Dorsolateral prefrontal cortex (tissue), 120 donors: ENCODE measurements at regions of chr9 and their contacts with region 1.

Region 1: GRCh38 chr9:115013998-115014397 is 83.6 kb upstream of the TNFSF8 start:
- DNase-seq: peak in 9 of 10 donors; percentile 45 to 77 (median 65)
- H3K4me3 ChIP-seq: no peak overlapping the region
- H3K27ac ChIP-seq: no peak overlapping the region
- H3K27me3 ChIP-seq: peaks cover 0 to 3% (median 0%) of the 10 kb centered on the region in 45 donors
- CTCF ChIP-seq: peak; percentile 66 to 95 (median 84)

Region 2: DNA sequence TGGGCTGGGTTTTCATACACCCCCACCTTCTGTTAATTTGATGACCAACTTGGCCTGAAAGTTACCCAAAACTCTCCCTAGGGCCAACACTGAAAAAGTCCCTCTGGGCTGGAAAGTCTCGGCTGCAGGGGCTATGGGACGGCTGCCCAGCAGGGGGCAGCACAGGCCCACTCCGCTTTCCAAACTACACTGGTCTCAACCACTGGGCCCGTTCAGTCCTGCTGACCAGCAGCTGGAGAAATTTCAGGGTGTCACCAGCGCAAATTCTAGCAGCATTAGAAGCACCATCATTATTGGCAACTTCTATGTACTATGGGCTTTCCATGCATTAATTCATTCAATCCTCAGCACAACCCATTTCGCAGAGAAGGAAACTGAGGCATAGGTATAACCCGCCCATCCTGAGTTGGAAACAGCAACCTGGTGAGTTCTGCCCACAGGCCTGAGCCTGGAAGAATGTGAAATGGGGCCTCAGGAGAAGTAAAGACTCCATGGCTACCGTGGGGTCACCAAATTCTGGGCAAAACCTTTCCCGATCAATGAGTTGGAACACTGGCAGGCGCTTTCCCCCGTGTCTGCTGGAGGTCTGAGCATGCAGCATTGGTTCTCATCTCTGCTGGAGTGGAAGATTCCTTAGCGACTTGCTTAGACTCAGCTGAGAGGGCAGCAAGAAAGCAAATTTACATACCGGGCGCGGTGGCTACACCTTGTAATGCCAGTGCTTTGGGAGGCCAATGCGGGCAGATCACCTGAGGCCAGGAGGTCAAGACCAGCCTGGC is 674.7 kb before region 1 on chr9:
- intact Hi-C with region 1: loop called in 1 of 2 experiments (anchors 10 kb)
- DNase-seq: peak in 4 of 10 donors; percentile 39 to 72 (median 55)
- H3K4me3 ChIP-seq: no peak overlapping the region
- H3K27ac ChIP-seq: no peak overlapping the region
- H3K27me3 ChIP-seq: no peaks in the 10 kb centered on the region
- CTCF ChIP-seq: peak; percentile 30 to 85 (median 73)

Region 3: GRCh38 chr9:114405294-114406034 is 608.5 kb before region 1 on chr9:
- intact Hi-C with region 1: loop called (anchors 5 to 10 kb)
- DNase-seq: peak; percentile 50 to 89 (median 82)
- H3K4me3 ChIP-seq: no peak overlapping the region
- H3K27ac ChIP-seq: peak overlapping the region in 55 of 59 donors; percentile 7 to 87 (median 67)
- H3K27me3 ChIP-seq: no peaks in the 10 kb centered on the region
- CTCF ChIP-seq: peak; percentile 52 to 93 (median 82)

Region 4: GRCh38 chr9:114681594-114682332 is 332.2 kb before region 1 on chr9 and contains the start of gene TEX48:
- intact Hi-C with region 1: loop called (anchors 1 to 5 kb)
- DNase-seq: peak in 6 of 10 donors; percentile 5 to 64 (median 55)
- H3K4me3 ChIP-seq: no peak within 1 kb of the TSS
- H3K27ac ChIP-seq: no peak within 1 kb of the TSS
- H3K27me3 ChIP-seq: no peaks in the 10 kb centered on the region
- CTCF ChIP-seq: peak in 54 of 56 donors; percentile 15 to 71 (median 56)
- total RNA-seq, gene TEX48: not detected

Region 5: GRCh38 chr9:114745108-114745848 is 268.7 kb before region 1 on chr9:
- intact Hi-C with region 1: loop called in 1 of 2 experiments (anchors 10 kb)
- DNase-seq: no peak
- H3K4me3 ChIP-seq: no peak overlapping the region
- H3K27ac ChIP-seq: no peak overlapping the region
- H3K27me3 ChIP-seq: no peaks in the 10 kb centered on the region
- CTCF ChIP-seq: peak in 1 of 56 donors; percentile 17

Region 6: DNA sequence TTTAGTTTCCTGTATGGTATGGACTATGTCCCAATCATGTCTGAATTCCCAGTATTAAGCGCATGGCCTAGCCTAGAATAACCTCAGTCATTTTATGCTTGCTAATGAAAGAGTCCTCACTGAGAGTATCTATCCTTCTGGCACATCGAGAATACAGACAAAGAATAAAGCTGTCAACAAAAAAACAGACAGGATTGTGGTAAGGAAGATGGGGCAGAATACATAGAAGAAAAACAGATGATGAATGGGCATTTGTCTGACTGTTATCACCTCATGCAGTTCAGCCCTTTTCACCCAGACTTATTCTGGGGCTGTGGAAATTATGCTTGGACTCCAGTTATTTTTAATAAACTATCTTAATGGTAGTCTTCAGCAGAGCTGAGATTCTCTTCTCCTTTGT is 467.8 kb after region 1 on chr9:
- intact Hi-C with region 1: no loop called
- DNase-seq: no peak
- H3K4me3 ChIP-seq: no peak overlapping the region
- H3K27ac ChIP-seq: no peak overlapping the region
- H3K27me3 ChIP-seq: no peaks in the 10 kb centered on the region
- CTCF ChIP-seq: no peak

Region 7: GRCh38 chr9:115524453-115525059 is 510.6 kb after region 1 on chr9:
- intact Hi-C with region 1: loop called (anchors 5 to 10 kb)
- DNase-seq: peak in 2 of 10 donors; percentile 12 to 20
- H3K4me3 ChIP-seq: no peak overlapping the region
- H3K27ac ChIP-seq: no peak overlapping the region
- H3K27me3 ChIP-seq: peaks cover 0 to 13% (median 0%) of the 10 kb centered on the region in 45 donors
- CTCF ChIP-seq: peak; percentile 48 to 89 (median 79)